ENCODE measurements at regions of chr12 and their contacts with region 1.

Region 1: DNA sequence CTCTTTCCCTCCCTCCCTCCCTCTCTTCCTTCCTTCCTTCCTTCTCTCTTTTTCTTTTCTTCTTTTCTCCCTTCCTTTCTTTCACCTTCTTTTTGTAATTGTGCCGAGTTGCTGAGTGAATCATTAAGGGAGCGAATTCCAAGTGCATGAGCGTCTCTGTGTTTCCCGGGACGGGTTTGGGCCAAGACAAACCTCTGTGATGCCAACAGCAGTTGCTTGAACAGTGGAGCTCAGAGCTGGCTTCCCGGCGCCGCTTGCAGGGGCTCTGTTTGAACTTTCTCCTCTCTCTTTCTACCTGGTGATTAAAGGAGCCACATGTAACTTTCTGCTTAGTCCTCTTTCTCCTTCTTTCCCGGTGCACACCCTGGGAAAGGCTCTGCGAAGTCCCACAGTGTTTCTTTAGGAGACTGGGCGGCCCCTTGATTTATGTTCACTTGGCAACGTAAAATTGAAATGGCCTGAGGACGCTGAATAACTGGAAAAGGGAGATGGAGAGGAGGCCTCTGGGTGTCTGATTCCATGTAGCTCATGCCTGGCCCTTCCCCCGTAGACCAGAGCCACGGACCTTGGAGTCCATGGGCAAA is 33.7 kb upstream of the MAP1LC3B2 start:
- DNase-seq: peak; percentile 54 to 92
- H3K4me3 ChIP-seq: peak overlapping the region; percentile 31 to 58
- H3K27ac ChIP-seq: peak overlapping the region; percentile 82 to 83
- H3K4me1 ChIP-seq: peaks cover 2 to 28% of the 10 kb centered on the region in 2 donors
- H3K27me3 ChIP-seq: no peaks in the 10 kb centered on the region
- CTCF ChIP-seq: no peak

Region 2: GRCh38 chr12:116142936-116143898 is 382.3 kb before region 1 on chr12:
- intact Hi-C with region 1: loop called (anchors 5 kb)
- DNase-seq: no peak
- H3K4me3 ChIP-seq: peak overlapping the region in 1 of 2 donors; percentile 3
- H3K27ac ChIP-seq: peak overlapping the region; percentile 65
- H3K4me1 ChIP-seq: peaks cover 14 to 67% of the 10 kb centered on the region in 2 donors
- H3K27me3 ChIP-seq: no peaks in the 10 kb centered on the region
- CTCF ChIP-seq: no peak

Region 3: DNA sequence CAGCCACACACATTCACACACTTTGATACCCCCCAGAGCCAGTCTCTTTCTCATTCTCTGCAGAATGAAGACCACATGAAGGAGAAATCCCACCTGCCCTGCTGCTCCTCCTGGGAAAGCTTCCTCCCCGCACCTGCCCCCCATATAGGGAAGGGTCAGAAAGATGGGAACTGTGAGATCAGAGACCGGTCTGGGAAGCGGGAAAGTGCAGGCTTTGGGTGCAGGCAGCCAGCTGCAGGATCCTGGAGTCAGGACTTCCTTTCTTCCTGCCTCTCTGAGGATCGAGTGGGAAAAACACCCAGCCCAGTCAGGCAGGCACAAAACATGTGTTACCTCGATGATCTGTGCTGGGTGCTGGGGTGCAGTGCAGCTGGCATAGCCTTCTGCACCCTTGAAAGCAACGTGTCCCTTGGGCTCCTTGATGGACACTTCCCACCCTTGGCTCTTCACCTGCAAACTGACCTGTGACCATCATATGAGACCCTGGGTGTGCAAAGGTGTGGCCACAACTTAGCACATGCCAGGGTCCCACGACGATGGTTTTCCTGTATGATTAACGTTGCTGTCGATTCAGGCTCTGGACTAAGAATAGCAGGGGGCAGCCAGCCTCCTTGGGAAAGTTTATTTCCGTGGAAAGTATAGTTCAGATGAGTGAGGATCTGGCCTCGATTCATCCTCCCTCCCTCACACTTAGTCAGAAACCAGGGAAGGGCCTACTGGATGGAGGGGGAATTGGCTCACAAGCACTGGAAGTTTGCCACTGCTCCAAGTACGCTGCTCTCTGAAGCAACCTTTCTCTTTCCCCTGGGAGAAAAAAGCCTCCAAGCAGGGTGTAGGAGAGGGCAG is 142.6 kb before region 1 on chr12:
- intact Hi-C with region 1: loop called (anchors 5 kb)
- DNase-seq: peak; percentile 44 to 95
- H3K4me3 ChIP-seq: peak overlapping the region in 1 of 2 donors; percentile 24
- H3K27ac ChIP-seq: peak overlapping the region; percentile 73 to 81
- H3K4me1 ChIP-seq: peaks cover 12 to 32% of the 10 kb centered on the region in 2 donors
- H3K27me3 ChIP-seq: no peaks in the 10 kb centered on the region
- CTCF ChIP-seq: no peak

Region 4: DNA sequence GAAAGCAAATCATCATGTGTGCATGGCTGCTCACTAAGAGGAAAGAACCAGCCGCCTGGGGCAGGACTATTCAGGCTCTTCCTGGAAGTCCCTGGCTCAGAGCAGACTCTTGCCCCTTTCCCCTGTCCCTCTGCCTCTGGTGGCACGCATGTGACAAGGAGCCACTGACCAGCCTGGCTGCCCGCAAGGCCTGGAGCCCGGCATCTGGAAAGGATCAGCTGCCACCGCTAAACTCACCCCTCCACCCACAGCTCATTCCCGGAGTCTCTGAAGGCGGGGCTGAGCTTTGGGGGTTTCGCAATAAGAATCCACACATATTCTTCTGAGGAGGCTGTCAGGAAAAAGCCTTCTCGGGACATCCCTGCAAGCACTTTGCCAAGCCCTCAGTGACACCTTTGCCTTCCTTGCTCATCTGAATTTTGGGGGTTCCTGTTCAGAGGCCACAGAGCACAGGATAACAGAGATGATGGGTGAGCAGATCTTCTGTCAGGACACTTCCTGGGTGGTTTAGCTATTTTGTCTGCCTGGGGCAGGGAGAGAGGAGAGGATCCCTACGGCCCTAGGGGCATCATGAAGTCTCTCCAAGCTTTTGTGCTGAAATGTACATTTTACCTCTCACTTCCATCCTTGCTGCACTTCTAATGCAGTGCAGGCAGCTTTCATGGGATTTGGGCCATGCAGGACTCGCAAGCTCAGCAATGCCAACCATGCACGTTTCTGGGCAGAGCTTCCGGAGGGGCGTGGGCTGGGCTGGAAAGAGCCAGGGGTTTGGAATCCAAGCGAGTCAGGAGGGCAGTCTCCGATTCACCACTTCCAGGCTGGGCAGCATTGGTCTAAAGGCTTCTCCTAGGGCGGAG is 91.1 kb before region 1 on chr12:
- intact Hi-C with region 1: loop called (anchors 2 kb)
- DNase-seq: peak; percentile 83 to 97
- H3K4me3 ChIP-seq: peak overlapping the region; percentile 24 to 56
- H3K27ac ChIP-seq: peak overlapping the region; percentile 67 to 74
- H3K4me1 ChIP-seq: peaks cover 4 to 12% of the 10 kb centered on the region in 2 donors
- H3K27me3 ChIP-seq: no peaks in the 10 kb centered on the region
- CTCF ChIP-seq: no peak

Region 5: GRCh38 chr12:116466536-116466935 is 59.0 kb before region 1 on chr12:
- intact Hi-C with region 1: no loop called
- DNase-seq: no peak
- H3K4me3 ChIP-seq: no peak overlapping the region
- H3K27ac ChIP-seq: no peak overlapping the region
- H3K4me1 ChIP-seq: no peaks in the 10 kb centered on the region
- H3K27me3 ChIP-seq: no peaks in the 10 kb centered on the region
- CTCF ChIP-seq: no peak

Measured in ascending aorta (tissue), 2 donors.